Activated naive CD4-positive, alpha-beta T cell treated with anti-CD3 and anti-CD28 coated beads for 36 hours (primary cell): ENCODE measurements at regions of chr5 and their contacts with region 1.

Region 1: GRCh38 chr5:174910245-174910737 is 185.9 kb downstream of the MSX2 start:
- DNase-seq: peak; percentile 68
- H3K4me3 Mint-ChIP-seq: no peak overlapping the region
- H3K27ac Mint-ChIP-seq: no peak overlapping the region
- H3K4me1 Mint-ChIP-seq: no peaks in the 10 kb centered on the region
- H3K27me3 Mint-ChIP-seq: peaks cover 23% of the 10 kb centered on the region

Region 2: DNA sequence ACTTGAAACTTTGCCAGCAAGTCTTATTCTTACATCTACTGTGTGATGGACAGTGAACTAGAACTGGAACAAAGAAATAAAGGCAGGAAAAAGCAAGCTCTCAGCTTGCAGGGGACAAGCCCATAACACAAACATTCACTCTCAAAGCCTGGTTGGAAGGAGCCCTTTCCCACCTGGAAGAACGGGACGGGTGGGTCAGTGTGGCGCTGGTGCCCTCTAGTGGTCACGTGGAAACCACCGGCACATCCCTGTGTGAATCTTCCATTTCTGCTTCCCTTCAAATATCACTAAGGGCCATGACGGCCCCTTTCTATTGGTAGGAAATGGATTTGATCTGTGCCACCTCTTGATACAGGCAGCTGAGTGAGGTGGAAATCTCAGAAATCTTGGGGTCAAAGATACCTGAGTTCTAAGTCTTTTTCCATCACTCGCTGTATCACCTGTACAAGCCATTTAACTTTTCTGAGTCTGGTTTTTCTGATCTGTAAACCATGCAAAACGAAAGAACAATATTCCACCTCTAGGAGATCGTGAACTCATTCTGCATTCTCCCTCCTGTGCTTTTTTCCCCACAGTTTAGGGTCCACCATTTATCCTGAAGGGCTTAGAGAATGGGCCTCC is 25.7 kb after region 1 on chr5:
- CTCF ChIA-PET with region 1: interaction called, 7 read pairs
- intact Hi-C with region 1: loop called (anchors 1 kb)
- DNase-seq: peak; percentile 52
- H3K4me3 Mint-ChIP-seq: no peak overlapping the region
- H3K27ac Mint-ChIP-seq: no peak overlapping the region
- H3K4me1 Mint-ChIP-seq: no peaks in the 10 kb centered on the region
- H3K27me3 Mint-ChIP-seq: peaks cover 14% of the 10 kb centered on the region